ENCODE measurements at regions of chr4 and their contacts with region 1.

Region 1: GRCh38 chr4:98781641-98782357 is 123.4 kb upstream of the TSPAN5 start:
- DNase-seq: no peak
- ATAC-seq: no peak
- H3K4me3 ChIP-seq: no peak overlapping the region
- H3K27ac ChIP-seq: no peak overlapping the region
- H3K4me1 ChIP-seq: peaks cover 9 to 17% of the 10 kb centered on the region in 2 experiments; a peak in 4 of 5 replicates
- H3K27me3 ChIP-seq: peaks cover 0 to 5% of the 10 kb centered on the region in 2 experiments; a peak in 1 of 5 replicates
- CTCF ChIP-seq: no peak
- EP300 ChIP-seq: no peak
- POLR2A ChIP-seq: no peak
- RAD21 ChIP-seq: no peak

Region 2: GRCh38 chr4:97525236-97525635 is 1256.6 kb before region 1 on chr4:
- CTCF ChIA-PET with region 1: no interaction called
- POLR2A ChIA-PET with region 1: no interaction called
- in situ Hi-C with region 1: no loop called
- intact Hi-C with region 1: no loop called
- DNase-seq: no peak
- ATAC-seq: no peak
- H3K4me3 ChIP-seq: no peak overlapping the region
- H3K27ac ChIP-seq: no peak overlapping the region
- H3K4me1 ChIP-seq: no peaks in the 10 kb centered on the region
- H3K27me3 ChIP-seq: no peaks in the 10 kb centered on the region
- CTCF ChIP-seq: no peak
- EP300 ChIP-seq: no peak
- POLR2A ChIP-seq: no peak
- RAD21 ChIP-seq: no peak

Region 3: GRCh38 chr4:98794565-98795205 is 12.9 kb after region 1 on chr4:
- CTCF ChIA-PET with region 1: no interaction called
- POLR2A ChIA-PET with region 1: interaction called, 11 read pairs
- in situ Hi-C with region 1: no loop called
- intact Hi-C with region 1: no loop called
- DNase-seq: peak; percentile 33 to 83 (median 65)
- ATAC-seq: peak; percentile 99
- H3K4me3 ChIP-seq: no peak overlapping the region
- H3K27ac ChIP-seq: peak overlapping the region; percentile 32; the same call in 2 of the 3 replicates
- H3K4me1 ChIP-seq: peaks cover 0 to 13% of the 10 kb centered on the region in 2 experiments; a peak in 3 of 5 replicates
- H3K27me3 ChIP-seq: no peaks in the 10 kb centered on the region
- CTCF ChIP-seq: no peak
- EP300 ChIP-seq: peak; percentile 47; the same call in 1 of the 2 replicates
- POLR2A ChIP-seq: no peak
- RAD21 ChIP-seq: peak in 1 of 2 experiments; percentile 11; a peak in 1 of 4 replicates

Region 4: DNA sequence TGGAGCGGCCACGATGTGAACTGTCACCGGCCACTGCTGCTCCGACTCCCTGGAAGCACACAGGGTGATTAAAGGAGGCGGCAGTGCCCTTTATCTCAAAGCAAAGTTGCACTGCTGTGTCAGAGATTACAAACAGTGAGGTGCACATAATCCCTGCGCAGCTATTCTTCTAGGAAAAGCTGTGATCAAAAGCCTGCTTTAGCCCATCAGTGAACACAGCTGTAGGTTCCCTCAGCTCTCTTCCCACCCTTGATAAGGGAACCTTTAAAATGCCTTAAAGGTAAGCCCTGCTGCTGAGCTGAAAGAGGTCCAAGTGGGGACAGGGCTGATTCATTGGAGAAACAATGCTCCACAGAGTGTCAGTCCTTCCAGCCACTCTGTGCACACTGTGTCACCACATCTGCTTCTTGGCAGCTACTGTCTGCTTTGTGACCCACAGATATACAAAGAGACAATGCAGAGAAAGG is 19.5 kb after region 1 on chr4:
- CTCF ChIA-PET with region 1: no interaction called
- POLR2A ChIA-PET with region 1: interaction called, 3 read pairs
- in situ Hi-C with region 1: no loop called
- intact Hi-C with region 1: loop called (anchors 1 kb)
- DNase-seq: peak in 3 of 4 experiments; percentile 22 to 90 (median 75)
- ATAC-seq: peak; percentile 92
- H3K4me3 ChIP-seq: no peak overlapping the region
- H3K27ac ChIP-seq: no peak overlapping the region; the same call in 2 of the 3 replicates
- H3K4me1 ChIP-seq: peaks cover 20 to 35% of the 10 kb centered on the region in 2 experiments
- H3K27me3 ChIP-seq: no peaks in the 10 kb centered on the region
- CTCF ChIP-seq: no peak
- EP300 ChIP-seq: peak; percentile 86
- POLR2A ChIP-seq: no peak
- RAD21 ChIP-seq: no peak

Region 5: GRCh38 chr4:99563310-99564186 is 781.7 kb after region 1 on chr4 and contains the start of gene TRMT10A:
- CTCF ChIA-PET with region 1: no interaction called
- POLR2A ChIA-PET with region 1: no interaction called
- in situ Hi-C with region 1: no loop called
- intact Hi-C with region 1: no loop called
- DNase-seq: peak; percentile 83 to 98 (median 86)
- ATAC-seq: peak; percentile 94
- H3K4me3 ChIP-seq: peak within 1 kb of the TSS; percentile 65
- H3K27ac ChIP-seq: peak within 1 kb of the TSS; percentile 96
- H3K4me1 ChIP-seq: peaks cover 0 to 4% of the 10 kb centered on the region in 2 experiments; a peak in 1 of 5 replicates
- H3K27me3 ChIP-seq: no peaks in the 10 kb centered on the region
- CTCF ChIP-seq: no peak
- EP300 ChIP-seq: 0 out of 2 replicates have a peak, but pooled peaks have one; percentile 9
- POLR2A ChIP-seq: peak; percentile 92
- RAD21 ChIP-seq: no peak
- polyA plus RNA-seq, gene TRMT10A: 13.1 to 16.1 TPM